ENCODE measurements at regions of chr20 and their contacts with region 1.

Region 1: GRCh38 chr20:18566892-18567742 is at the start of gene SMIM26:
- DNase-seq: peak; percentile 93
- H3K4me3 ChIP-seq: peak within 1 kb of the TSS; percentile 63 to 90 (median 66)
- H3K27ac ChIP-seq: peak within 1 kb of the TSS; percentile 73
- H3K4me1 ChIP-seq: peaks cover 7% of the 10 kb centered on the region
- H3K27me3 ChIP-seq: no peaks in the 10 kb centered on the region
- CTCF ChIP-seq: no peak
- total RNA-seq, gene SMIM26: 58.5 to 72.9 TPM

Region 2: GRCh38 chr20:18466894-18467730 is 100.0 kb before region 1 on chr20 and contains the starts of genes DZANK1 and POLR3F:
- CTCF ChIA-PET with region 1: no interaction called
- dilution Hi-C with region 1: no loop called
- in situ Hi-C with region 1: no loop called
- intact Hi-C with region 1: no loop called
- DNase-seq: peak; percentile 92
- H3K4me3 ChIP-seq: peak within 1 kb of the TSS; percentile 74 to 96 (median 82)
- H3K27ac ChIP-seq: peak within 1 kb of the TSS; percentile 98
- H3K4me1 ChIP-seq: peaks cover 19% of the 10 kb centered on the region
- H3K27me3 ChIP-seq: no peaks in the 10 kb centered on the region
- CTCF ChIP-seq: no peak
- total RNA-seq, gene DZANK1: 2.7 to 2.8 TPM
- total RNA-seq, gene POLR3F: 10.7 to 15.0 TPM

Region 3: GRCh38 chr20:20060234-20060998 is 1493.3 kb after region 1 on chr20:
- CTCF ChIA-PET with region 1: interaction called, 15 read pairs
- dilution Hi-C with region 1: no loop called
- in situ Hi-C with region 1: no loop called
- intact Hi-C with region 1: no loop called
- DNase-seq: no peak
- H3K4me3 ChIP-seq: no peak overlapping the region
- H3K27ac ChIP-seq: no peak overlapping the region
- H3K4me1 ChIP-seq: no peaks in the 10 kb centered on the region
- H3K27me3 ChIP-seq: no peaks in the 10 kb centered on the region
- CTCF ChIP-seq: no peak